MCF 10A (cell line): ENCODE measurements at regions of chr3 and their contacts with region 1.

Region 1: DNA sequence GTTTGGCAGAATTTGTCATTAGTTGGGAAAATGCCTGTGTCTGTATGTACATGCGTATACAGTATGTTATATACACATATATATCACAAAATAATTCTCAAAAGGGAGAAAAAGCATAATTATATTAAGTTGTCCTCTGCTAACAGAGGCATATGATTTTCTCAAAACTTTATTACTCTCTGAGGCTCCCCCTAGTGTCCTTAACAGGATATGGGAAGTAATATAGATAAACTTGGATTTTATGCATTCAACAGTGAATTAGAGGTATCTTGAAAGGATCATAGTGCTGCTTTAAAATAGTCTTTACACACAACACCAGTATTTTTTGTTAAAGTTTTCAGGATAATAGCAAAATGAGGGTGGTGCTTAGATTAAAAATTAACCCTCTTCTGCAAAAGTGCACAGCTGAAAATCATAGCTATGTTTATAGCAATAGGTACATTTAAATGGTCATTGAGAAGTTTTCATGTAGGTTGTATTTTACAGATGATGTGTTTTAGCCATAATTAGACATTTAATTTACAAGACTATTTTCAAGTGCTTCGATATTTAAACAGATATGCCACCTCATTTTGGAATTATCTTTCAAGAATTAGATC is 454.0 kb upstream of the ROBO2 start:
- DNase-seq: peak; percentile 27
- H3K4me3 Mint-ChIP-seq: no peak overlapping the region
- H3K27ac Mint-ChIP-seq: no peak overlapping the region
- H3K4me1 Mint-ChIP-seq: no peaks in the 10 kb centered on the region
- H3K27me3 Mint-ChIP-seq: peaks cover 29% of the 10 kb centered on the region
- CTCF ChIP-seq: peak; percentile 41

Region 2: DNA sequence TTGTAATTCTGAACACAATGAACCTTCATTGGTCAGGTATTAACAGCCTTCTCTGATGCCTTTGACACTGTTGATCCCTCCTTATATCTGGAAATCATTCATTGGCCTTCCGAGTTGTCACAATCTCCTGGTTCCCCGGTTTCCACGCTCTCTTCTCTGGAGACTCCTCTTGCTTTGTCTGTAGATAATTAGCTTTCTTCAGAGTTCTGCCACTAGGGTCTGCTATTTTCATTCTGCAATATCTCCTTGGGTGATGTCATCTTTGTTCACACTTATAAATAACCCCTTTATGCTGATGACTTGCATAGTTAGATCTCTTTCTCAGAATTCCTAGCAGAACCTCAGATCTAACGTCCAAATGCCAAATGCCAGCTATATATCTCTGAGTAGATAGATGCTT is 216.7 kb before region 1 on chr3:
- CTCF ChIA-PET with region 1: no interaction called
- POLR2A ChIA-PET with region 1: no interaction called
- intact Hi-C with region 1: loop called (anchors 2 kb)
- DNase-seq: peak; percentile 21
- H3K4me3 Mint-ChIP-seq: no peak overlapping the region
- H3K27ac Mint-ChIP-seq: no peak overlapping the region
- H3K4me1 Mint-ChIP-seq: no peaks in the 10 kb centered on the region
- H3K27me3 Mint-ChIP-seq: peaks cover 65% of the 10 kb centered on the region
- CTCF ChIP-seq: peak; percentile 11